Activated CD4-positive, alpha-beta T cell treated with anti-CD3 and anti-CD28 coated beads for 36 hours (primary cell): ENCODE measurements at regions of chr5 and their contacts with region 1.

Region 1: GRCh38 chr5:142356716-142357473 is 32.1 kb upstream of the SPRY4 start:
- DNase-seq: peak; percentile 94
- ATAC-seq: peak; percentile 85
- H3K4me3 Mint-ChIP-seq: peak overlapping the region; percentile 70
- H3K27ac Mint-ChIP-seq: peak overlapping the region; percentile 96
- H3K4me1 Mint-ChIP-seq: peaks cover 49% of the 10 kb centered on the region
- H3K27me3 Mint-ChIP-seq: no peaks in the 10 kb centered on the region

Region 2: DNA sequence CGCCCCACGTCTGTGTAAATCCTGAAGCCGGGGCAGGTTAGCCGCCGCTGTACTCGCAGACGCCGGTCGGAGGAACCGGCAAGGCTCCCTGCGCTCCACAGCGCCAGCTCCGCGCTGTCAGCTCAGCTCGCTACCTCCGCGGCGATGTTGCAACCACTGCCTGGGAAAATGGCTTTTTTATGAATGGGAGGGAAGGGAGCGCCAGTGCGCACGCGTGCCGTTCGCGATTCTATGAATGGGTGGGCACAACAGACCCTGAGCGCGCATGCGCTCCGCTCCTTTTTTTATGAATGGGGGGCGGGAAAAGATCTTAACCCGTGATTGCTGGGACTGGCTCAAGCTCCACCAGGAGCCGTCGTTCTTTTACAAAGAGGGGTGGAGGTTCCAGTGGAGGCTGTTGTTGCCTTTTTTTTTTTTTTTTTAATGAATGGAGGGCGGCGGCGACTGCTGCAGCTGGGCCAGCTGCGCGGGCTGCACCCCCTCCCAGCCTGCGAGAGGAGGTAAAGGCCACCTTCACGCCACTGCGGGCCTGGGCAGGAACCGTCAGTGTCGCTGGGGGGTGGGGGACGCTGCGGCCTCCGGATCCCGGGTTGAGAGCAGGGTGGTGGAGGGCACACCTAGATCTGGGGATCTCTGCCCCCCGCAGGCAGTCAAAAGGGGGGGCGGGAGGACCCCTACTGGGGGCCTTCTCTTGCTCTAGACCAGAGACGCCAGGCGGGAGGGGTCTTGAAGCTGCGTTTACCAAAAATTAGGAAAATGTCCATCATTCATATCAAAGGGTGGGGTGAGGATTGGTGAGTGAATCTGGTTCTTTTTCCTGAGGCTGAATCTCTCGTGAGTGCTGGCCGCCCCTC is 31.8 kb before region 1 on chr5 and contains the start of gene SPRY4:
- CTCF ChIA-PET with region 1: interaction called, 3 read pairs
- POLR2A ChIA-PET with region 1: no interaction called
- intact Hi-C with region 1: loop called (anchors 1 kb)
- DNase-seq: peak; percentile 95
- ATAC-seq: peak; percentile 89
- H3K4me3 Mint-ChIP-seq: peak within 1 kb of the TSS; percentile 77
- H3K27ac Mint-ChIP-seq: peak within 1 kb of the TSS; percentile 79
- H3K4me1 Mint-ChIP-seq: peaks cover 37% of the 10 kb centered on the region
- H3K27me3 Mint-ChIP-seq: peaks cover 36% of the 10 kb centered on the region
- total RNA-seq, gene SPRY4: 0.93 to 0.98 TPM

Region 3: GRCh38 chr5:142342128-142342981 is 14.5 kb before region 1 on chr5:
- CTCF ChIA-PET with region 1: no interaction called
- POLR2A ChIA-PET with region 1: no interaction called
- intact Hi-C with region 1: no loop called
- DNase-seq: no peak
- ATAC-seq: no peak
- H3K4me3 Mint-ChIP-seq: no peak overlapping the region
- H3K27ac Mint-ChIP-seq: no peak overlapping the region
- H3K4me1 Mint-ChIP-seq: no peaks in the 10 kb centered on the region
- H3K27me3 Mint-ChIP-seq: no peaks in the 10 kb centered on the region

Region 4: DNA sequence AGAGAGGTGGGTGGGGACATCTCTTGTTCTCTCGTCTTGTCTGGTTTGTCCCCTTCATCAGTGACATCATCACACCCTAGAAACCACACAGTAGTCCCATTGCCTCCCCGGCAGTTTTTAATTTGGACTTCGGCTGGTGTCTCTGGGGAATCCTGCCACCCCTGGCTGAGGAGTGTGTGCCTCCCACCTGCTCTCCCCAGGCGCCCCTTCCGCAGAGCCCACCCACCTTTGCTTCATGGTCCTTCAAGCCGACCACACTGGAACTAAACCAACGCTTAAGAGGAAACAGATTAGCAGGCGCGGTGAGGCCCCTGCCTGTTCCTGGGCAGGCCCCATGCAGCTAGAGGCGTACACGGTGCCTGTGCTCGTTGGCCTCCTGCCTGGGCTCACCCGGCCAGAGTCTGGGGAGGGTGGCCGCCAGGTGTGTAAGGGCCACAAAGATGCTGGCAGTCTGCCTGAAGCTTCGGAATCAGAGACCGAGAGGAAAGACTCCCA is 75.5 kb after region 1 on chr5:
- CTCF ChIA-PET with region 1: no interaction called
- POLR2A ChIA-PET with region 1: no interaction called
- intact Hi-C with region 1: loop called in 1 of 2 experiments (anchors 2 kb)
- DNase-seq: peak; percentile 55
- ATAC-seq: peak; percentile 73
- H3K4me3 Mint-ChIP-seq: peak overlapping the region; percentile 12
- H3K27ac Mint-ChIP-seq: peak overlapping the region; percentile 79
- H3K4me1 Mint-ChIP-seq: peaks cover 39% of the 10 kb centered on the region
- H3K27me3 Mint-ChIP-seq: no peaks in the 10 kb centered on the region

Region 5: DNA sequence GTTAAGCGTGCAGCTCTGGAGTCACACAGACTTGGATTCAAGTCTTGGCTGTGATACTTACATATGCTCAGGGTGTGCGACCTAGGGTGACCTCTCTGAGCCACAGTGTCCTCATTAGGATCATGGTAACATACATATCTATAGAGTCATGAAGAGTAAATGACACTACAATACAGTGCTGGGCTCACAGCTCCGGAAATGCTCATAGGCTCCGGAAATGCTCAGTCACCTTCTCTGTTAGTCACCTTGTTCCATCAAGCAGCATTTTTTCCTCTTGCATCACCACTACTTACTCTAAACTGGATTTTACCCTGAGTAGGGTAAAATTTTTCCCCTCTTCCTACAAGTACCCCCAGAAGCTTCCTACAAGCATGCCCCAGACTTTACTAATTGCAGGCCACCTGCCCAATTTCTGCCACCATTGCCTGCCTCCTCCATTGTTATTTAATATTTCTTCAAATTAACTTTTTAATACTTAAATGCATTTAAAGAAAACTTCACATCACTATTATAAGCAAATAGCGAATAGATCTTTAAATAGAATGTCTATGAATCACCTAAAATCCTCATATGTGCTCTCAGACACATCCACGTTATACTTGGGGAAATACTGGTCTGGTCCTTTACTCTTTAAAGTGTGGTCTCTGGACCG is 115.5 kb after region 1 on chr5:
- CTCF ChIA-PET with region 1: no interaction called
- POLR2A ChIA-PET with region 1: no interaction called
- intact Hi-C with region 1: loop called (anchors 1 to 5 kb)
- DNase-seq: peak; percentile 78
- ATAC-seq: peak; percentile 100
- H3K4me3 Mint-ChIP-seq: no peak overlapping the region
- H3K27ac Mint-ChIP-seq: peak overlapping the region; percentile 92
- H3K4me1 Mint-ChIP-seq: peaks cover 21% of the 10 kb centered on the region
- H3K27me3 Mint-ChIP-seq: no peaks in the 10 kb centered on the region

Region 6: GRCh38 chr5:142826741-142827732 is 470.1 kb after region 1 on chr5:
- CTCF ChIA-PET with region 1: no interaction called
- POLR2A ChIA-PET with region 1: no interaction called
- intact Hi-C with region 1: loop called in 1 of 2 experiments (anchors 5 kb)
- DNase-seq: peak; percentile 60
- ATAC-seq: peak; percentile 57
- H3K4me3 Mint-ChIP-seq: no peak overlapping the region
- H3K27ac Mint-ChIP-seq: peak overlapping the region; percentile 63
- H3K4me1 Mint-ChIP-seq: peaks cover 73% of the 10 kb centered on the region
- H3K27me3 Mint-ChIP-seq: no peaks in the 10 kb centered on the region